ENCODE measurements at regions of chrX and their contacts with region 1.

Region 1: GRCh38 chrX:10189317-10190268 is 32.8 kb downstream of the CLCN4 start:
- DNase-seq: peak; percentile 59 to 82
- ATAC-seq: peak; percentile 77 to 93 (median 78)
- H3K4me3 ChIP-seq: no peak overlapping the region
- H3K4me3 Mint-ChIP-seq: no peak overlapping the region
- H3K27ac ChIP-seq: no peak overlapping the region
- H3K27ac Mint-ChIP-seq: no peak overlapping the region
- H3K4me1 ChIP-seq: no peaks in the 10 kb centered on the region
- H3K4me1 Mint-ChIP-seq: peaks cover 0 to 7% of the 10 kb centered on the region in 2 donors
- H3K27me3 ChIP-seq: no peaks in the 10 kb centered on the region
- H3K27me3 Mint-ChIP-seq: peaks cover 0 to 11% of the 10 kb centered on the region in 2 donors
- CTCF ChIP-seq: peak; percentile 29

Region 2: DNA sequence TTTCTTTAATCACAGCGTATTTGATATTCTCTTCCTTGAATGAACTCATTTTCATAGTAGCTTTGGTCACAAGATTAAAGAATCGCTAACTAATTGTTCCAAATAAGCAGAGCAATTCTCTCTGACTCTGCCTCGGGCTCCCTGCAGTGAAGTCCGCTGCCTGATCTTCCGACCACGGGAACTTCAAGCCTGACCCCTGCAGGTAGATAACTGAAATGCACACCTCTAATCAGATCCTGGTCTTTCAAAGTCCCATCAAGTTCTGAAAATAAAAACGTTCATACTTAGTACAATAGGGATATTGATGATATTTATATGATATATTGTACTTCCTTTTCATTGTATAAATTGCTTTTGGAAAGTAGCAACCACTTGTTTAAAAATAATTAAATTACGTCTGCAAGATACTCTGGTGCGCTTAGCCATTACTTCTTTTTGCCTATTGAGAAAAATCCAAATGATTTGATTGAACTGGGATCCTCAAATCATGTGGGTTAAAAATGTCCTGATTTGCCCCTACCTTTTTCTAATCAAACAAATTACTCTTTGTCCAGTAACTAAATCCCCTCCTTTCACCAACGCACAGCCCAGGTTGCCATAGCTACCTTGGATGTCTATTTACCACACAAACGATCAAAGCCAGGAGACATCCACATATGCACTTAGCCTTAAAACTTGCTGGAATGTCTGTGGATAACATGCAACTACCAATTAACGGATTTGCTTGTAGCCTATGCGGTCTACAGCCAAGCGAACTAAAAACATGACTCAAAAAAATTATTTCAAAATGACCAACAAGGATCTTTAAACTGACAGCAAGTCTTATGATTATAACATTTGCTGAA is 426.6 kb after region 1 on chrX:
- intact Hi-C with region 1: loop called (anchors 5 kb)
- DNase-seq: peak in 1 of 2 donors; percentile 12
- ATAC-seq: peak in 1 of 3 donors; percentile 53
- H3K4me3 ChIP-seq: no peak overlapping the region
- H3K4me3 Mint-ChIP-seq: no peak overlapping the region
- H3K27ac ChIP-seq: no peak overlapping the region
- H3K27ac Mint-ChIP-seq: no peak overlapping the region
- H3K4me1 ChIP-seq: peaks cover 8% of the 10 kb centered on the region
- H3K4me1 Mint-ChIP-seq: peaks cover 16 to 19% of the 10 kb centered on the region in 2 donors
- H3K27me3 ChIP-seq: peaks cover 3% of the 10 kb centered on the region
- H3K27me3 Mint-ChIP-seq: peaks cover 17 to 44% of the 10 kb centered on the region in 2 donors
- CTCF ChIP-seq: peak; percentile 40

Region 3: DNA sequence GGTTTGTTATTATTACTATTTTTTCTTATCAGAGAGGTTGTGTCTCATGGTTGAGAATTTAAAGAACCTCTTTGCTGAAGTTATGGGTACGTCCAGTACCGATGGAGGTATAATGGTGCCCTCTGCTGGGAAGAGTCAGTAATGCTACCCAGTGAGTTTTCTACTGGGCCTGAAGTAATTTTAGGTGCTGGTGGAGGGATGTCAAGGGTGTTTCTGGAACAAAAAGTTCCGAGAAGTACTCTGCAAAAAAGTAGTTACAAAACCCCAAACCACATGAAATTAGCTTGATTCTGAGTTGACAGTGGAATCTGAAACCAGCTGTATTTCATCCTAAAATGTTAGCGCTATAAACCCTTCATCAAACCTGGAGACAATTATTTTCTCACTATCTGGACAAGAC is 533.3 kb after region 1 on chrX:
- intact Hi-C with region 1: loop called (anchors 1 kb)
- DNase-seq: peak in 1 of 2 donors; percentile 46
- ATAC-seq: peak in 1 of 3 donors; percentile 58
- H3K4me3 ChIP-seq: no peak overlapping the region
- H3K4me3 Mint-ChIP-seq: no peak overlapping the region
- H3K27ac ChIP-seq: no peak overlapping the region
- H3K27ac Mint-ChIP-seq: no peak overlapping the region
- H3K4me1 ChIP-seq: no peaks in the 10 kb centered on the region
- H3K4me1 Mint-ChIP-seq: no peaks in the 10 kb centered on the region
- H3K27me3 ChIP-seq: no peaks in the 10 kb centered on the region
- H3K27me3 Mint-ChIP-seq: peaks cover 0 to 11% of the 10 kb centered on the region in 2 donors
- CTCF ChIP-seq: peak; percentile 18

Region 4: DNA sequence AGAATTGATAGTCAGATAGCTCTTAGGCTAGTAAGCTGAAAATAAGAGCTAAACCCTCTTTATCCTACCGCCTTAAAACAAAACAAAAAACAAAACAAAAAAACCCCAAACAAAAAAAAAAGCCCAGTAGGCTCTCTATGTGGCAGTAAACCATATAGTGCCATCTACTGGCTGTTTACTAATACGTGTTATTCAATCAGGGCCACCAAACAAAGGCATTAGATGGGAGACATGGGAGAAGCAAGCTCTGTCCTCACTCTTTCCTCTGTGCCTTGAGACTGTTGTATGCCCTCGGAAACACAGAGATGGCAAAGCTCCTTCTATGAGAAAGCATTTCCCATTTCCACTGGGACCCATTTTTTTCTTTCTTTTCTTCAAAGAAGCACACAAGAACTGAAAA is 579.6 kb after region 1 on chrX:
- intact Hi-C with region 1: loop called (anchors 5 kb)
- DNase-seq: peak in 1 of 2 donors; percentile 3
- ATAC-seq: peak in 1 of 3 donors; percentile 41
- H3K4me3 ChIP-seq: no peak overlapping the region
- H3K4me3 Mint-ChIP-seq: no peak overlapping the region
- H3K27ac ChIP-seq: no peak overlapping the region
- H3K27ac Mint-ChIP-seq: no peak overlapping the region
- H3K4me1 ChIP-seq: no peaks in the 10 kb centered on the region
- H3K4me1 Mint-ChIP-seq: no peaks in the 10 kb centered on the region
- H3K27me3 ChIP-seq: no peaks in the 10 kb centered on the region
- H3K27me3 Mint-ChIP-seq: no peaks in the 10 kb centered on the region
- CTCF ChIP-seq: no peak

Region 5: GRCh38 chrX:11137543-11138139 is 948.0 kb after region 1 on chrX:
- intact Hi-C with region 1: loop called (anchors 1 kb)
- DNase-seq: peak in 1 of 2 donors; percentile 67
- ATAC-seq: no peak
- H3K4me3 ChIP-seq: no peak overlapping the region
- H3K4me3 Mint-ChIP-seq: no peak overlapping the region
- H3K27ac ChIP-seq: no peak overlapping the region
- H3K27ac Mint-ChIP-seq: no peak overlapping the region
- H3K4me1 ChIP-seq: no peaks in the 10 kb centered on the region
- H3K4me1 Mint-ChIP-seq: no peaks in the 10 kb centered on the region
- H3K27me3 ChIP-seq: no peaks in the 10 kb centered on the region
- H3K27me3 Mint-ChIP-seq: peaks cover 0 to 9% of the 10 kb centered on the region in 2 donors
- CTCF ChIP-seq: peak; percentile 70